Natural killer cell (primary cell): ENCODE measurements at regions of chr10 and their contacts with region 1.

Region 1: DNA sequence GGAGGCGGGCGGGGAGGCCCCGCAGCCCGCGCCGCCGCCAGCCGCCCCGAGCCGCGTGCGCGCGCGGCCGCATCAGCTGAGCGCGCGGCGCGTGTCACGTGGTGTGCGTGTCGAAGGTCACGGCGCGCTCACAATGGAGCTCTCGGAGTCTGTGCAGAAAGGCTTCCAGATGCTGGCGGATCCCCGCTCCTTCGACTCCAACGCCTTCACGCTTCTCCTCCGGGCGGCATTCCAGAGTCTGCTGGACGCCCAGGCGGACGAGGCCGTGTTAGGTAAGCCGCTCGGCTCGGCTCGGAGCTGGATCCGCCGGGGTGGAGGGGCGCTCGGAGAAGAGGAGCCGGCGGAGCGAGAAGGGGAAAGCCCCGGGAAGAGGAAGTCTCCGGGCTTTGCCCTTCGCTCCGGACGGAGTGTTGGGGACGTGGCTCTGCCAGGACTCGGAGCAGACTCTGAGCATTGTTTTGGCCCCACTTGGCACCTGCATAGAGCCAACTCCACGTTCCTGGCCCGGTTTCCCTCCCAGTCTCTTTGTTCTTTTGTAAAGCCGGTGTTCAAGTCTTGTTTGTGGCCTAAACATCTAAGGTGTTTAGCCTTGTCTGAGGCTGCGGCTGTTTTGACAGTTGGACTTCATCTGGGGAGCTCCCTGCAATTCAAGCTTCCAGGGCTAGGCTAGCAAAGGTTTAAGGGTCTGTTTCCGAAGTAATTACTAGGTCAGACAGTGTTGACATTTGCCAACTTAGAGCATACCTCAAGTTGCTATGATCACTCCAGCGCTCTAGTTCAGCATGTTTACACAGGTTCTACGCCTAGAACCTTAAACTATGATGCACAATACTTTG is at the start of gene COMMD3:
- DNase-seq: peak; percentile 83 to 94
- ATAC-seq: peak; percentile 65 to 92 (median 79)
- H3K4me3 ChIP-seq: peak within 1 kb of the TSS; percentile 96
- H3K4me3 Mint-ChIP-seq: peak within 1 kb of the TSS; percentile 100
- H3K27ac ChIP-seq: peak within 1 kb of the TSS; percentile 89
- H3K27ac Mint-ChIP-seq: peak within 1 kb of the TSS; percentile 92 to 93
- H3K4me1 ChIP-seq: peaks cover 11% of the 10 kb centered on the region
- H3K4me1 Mint-ChIP-seq: peaks cover 22 to 33% of the 10 kb centered on the region in 2 donors
- H3K27me3 ChIP-seq: peaks cover 2% of the 10 kb centered on the region
- H3K27me3 Mint-ChIP-seq: peaks cover 4 to 8% of the 10 kb centered on the region in 2 donors
- CTCF ChIP-seq: no peak
- total RNA-seq, gene COMMD3: 43.1 to 48.3 (median 44.2) TPM

Region 2: GRCh38 chr10:21533467-21534279 is 782.8 kb before region 1 on chr10 and contains the start of gene MLLT10:
- intact Hi-C with region 1: loop called (anchors 5 kb)
- DNase-seq: peak; percentile 87 to 97
- ATAC-seq: peak; percentile 82 to 94 (median 83)
- H3K4me3 ChIP-seq: peak within 1 kb of the TSS; percentile 73
- H3K4me3 Mint-ChIP-seq: peak within 1 kb of the TSS; percentile 91
- H3K27ac ChIP-seq: peak within 1 kb of the TSS; percentile 69
- H3K27ac Mint-ChIP-seq: peak within 1 kb of the TSS; percentile 76 to 90
- H3K4me1 ChIP-seq: peaks cover 11% of the 10 kb centered on the region
- H3K4me1 Mint-ChIP-seq: peaks cover 16% of the 10 kb centered on the region in 2 donors
- H3K27me3 ChIP-seq: peaks cover 6% of the 10 kb centered on the region
- H3K27me3 Mint-ChIP-seq: peaks cover 5 to 9% of the 10 kb centered on the region in 2 donors
- CTCF ChIP-seq: peak; percentile 27
- total RNA-seq, gene MLLT10: 40.4 to 65.2 (median 60.0) TPM

Region 3: GRCh38 chr10:22003079-22003913 is 313.2 kb before region 1 on chr10 and contains the start of gene DNAJC1:
- intact Hi-C with region 1: loop called (anchors 5 kb)
- DNase-seq: peak; percentile 96 to 98
- ATAC-seq: peak; percentile 84 to 96 (median 89)
- H3K4me3 ChIP-seq: peak within 1 kb of the TSS; percentile 96
- H3K4me3 Mint-ChIP-seq: peak within 1 kb of the TSS; percentile 91
- H3K27ac ChIP-seq: peak within 1 kb of the TSS; percentile 97
- H3K27ac Mint-ChIP-seq: peak within 1 kb of the TSS; percentile 85 to 88
- H3K4me1 ChIP-seq: peaks cover 4% of the 10 kb centered on the region
- H3K4me1 Mint-ChIP-seq: peaks cover 38 to 45% of the 10 kb centered on the region in 2 donors
- H3K27me3 ChIP-seq: no peaks in the 10 kb centered on the region
- H3K27me3 Mint-ChIP-seq: peaks cover 0 to 5% of the 10 kb centered on the region in 2 donors
- CTCF ChIP-seq: peak; percentile 9
- total RNA-seq, gene DNAJC1: 38.4 to 63.7 (median 50.6) TPM

Region 4: DNA sequence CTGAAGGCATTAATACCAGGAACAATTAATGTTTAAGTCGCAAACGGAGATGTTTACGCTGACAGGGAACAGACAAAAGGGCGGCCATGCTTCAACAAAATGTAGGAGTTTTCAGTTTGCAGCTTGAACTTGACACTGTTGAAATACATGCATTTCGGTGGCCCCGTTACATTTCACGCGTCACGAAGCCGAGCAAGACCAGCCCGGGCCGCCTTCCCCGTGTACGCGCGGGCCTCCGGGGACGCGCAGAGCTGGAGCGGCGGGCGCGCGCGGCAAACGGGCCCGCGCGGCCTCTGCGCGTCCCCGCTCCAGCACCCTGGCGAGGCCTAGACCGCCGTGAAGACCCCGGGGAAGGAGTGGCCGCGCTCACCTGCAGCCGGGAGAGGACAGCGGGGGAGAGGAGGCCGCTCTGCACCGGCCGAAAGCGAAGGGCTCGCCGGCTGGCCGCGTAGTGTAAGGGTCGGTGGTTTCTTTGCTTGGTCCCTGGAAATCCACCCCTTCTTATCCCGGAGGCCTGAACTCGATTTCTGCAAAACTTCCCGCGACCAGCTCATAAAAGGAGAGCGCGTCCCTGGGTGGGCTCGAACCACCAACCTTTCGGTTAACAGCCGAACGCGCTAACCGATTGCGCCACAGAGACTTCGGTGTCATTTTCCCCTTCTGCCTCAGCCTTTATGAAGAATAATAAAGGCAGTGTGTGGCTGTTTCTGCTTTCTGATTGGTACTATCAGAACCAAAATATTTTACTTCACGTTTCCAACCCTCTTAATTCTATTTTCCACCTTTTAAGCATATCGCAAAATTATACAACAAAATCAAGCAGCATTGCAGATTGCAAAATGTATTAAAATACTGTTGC is 87.3 kb before region 1 on chr10:
- intact Hi-C with region 1: loop called (anchors 1 kb)
- DNase-seq: peak; percentile 85 to 93
- ATAC-seq: peak; percentile 84 to 93 (median 85)
- H3K4me3 ChIP-seq: peak overlapping the region; percentile 69
- H3K4me3 Mint-ChIP-seq: peak overlapping the region; percentile 93
- H3K27ac ChIP-seq: peak overlapping the region; percentile 70
- H3K27ac Mint-ChIP-seq: peak overlapping the region; percentile 96 to 97
- H3K4me1 ChIP-seq: peaks cover 3% of the 10 kb centered on the region
- H3K4me1 Mint-ChIP-seq: peaks cover 15 to 21% of the 10 kb centered on the region in 2 donors
- H3K27me3 ChIP-seq: peaks cover 4% of the 10 kb centered on the region
- H3K27me3 Mint-ChIP-seq: peaks cover 14 to 16% of the 10 kb centered on the region in 2 donors
- CTCF ChIP-seq: no peak

Region 5: GRCh38 chr10:22251751-22252223 is 64.7 kb before region 1 on chr10:
- intact Hi-C with region 1: loop called (anchors 5 kb)
- DNase-seq: peak; percentile 34 to 81
- ATAC-seq: peak; percentile 61 to 68 (median 67)
- H3K4me3 ChIP-seq: peak overlapping the region; percentile 83
- H3K4me3 Mint-ChIP-seq: peak overlapping the region; percentile 98
- H3K27ac ChIP-seq: peak overlapping the region; percentile 96
- H3K27ac Mint-ChIP-seq: peak overlapping the region; percentile 74 to 85
- H3K4me1 ChIP-seq: peaks cover 19% of the 10 kb centered on the region
- H3K4me1 Mint-ChIP-seq: peaks cover 17 to 23% of the 10 kb centered on the region in 2 donors
- H3K27me3 ChIP-seq: peaks cover 19% of the 10 kb centered on the region
- H3K27me3 Mint-ChIP-seq: peaks cover 34 to 49% of the 10 kb centered on the region in 2 donors
- CTCF ChIP-seq: no peak

Region 6: DNA sequence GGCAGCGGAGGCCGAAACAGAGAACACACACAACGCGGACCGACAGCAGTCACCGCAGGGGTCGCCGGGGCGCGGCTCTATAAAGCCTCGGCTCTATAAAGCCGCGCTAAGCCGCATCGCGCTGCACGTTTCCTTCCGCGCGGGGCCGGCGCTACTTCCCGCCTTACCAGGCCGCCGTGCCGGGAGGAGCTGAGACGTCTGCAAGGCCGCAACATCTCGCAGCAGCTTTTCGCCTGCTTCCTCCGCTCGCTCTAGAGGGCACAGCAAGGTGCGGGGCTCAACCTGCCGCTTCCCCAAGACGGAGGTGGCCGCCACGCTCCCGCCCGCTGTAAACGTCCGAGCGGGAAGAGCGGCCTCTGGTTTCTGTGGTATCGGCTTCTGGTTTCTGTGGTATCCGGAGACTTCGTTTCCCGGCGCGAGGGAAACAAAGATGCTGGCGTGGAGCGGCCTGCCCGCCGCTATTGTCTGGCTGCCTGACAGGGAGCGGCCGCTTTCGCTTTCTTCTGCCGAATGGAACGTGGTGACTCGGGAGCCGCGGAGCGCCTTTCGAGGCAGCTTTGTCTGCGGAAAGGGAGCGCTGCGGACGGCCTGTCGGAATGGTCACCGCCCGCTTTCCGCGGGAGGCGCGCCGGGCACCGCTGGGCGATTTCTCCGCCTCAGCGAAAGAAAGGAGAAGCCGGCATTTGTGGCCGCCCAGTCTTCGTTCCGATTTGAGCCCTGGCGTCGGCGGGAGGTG is 120.5 kb after region 1 on chr10:
- intact Hi-C with region 1: loop called (anchors 5 kb)
- DNase-seq: peak; percentile 86 to 95
- ATAC-seq: peak; percentile 80 to 93 (median 85)
- H3K4me3 ChIP-seq: peak overlapping the region; percentile 73
- H3K4me3 Mint-ChIP-seq: peak overlapping the region; percentile 95
- H3K27ac ChIP-seq: peak overlapping the region; percentile 98
- H3K27ac Mint-ChIP-seq: peak overlapping the region; percentile 97
- H3K4me1 ChIP-seq: peaks cover 23% of the 10 kb centered on the region
- H3K4me1 Mint-ChIP-seq: peaks cover 37 to 43% of the 10 kb centered on the region in 2 donors
- H3K27me3 ChIP-seq: peaks cover 2% of the 10 kb centered on the region
- H3K27me3 Mint-ChIP-seq: no peaks in the 10 kb centered on the region
- CTCF ChIP-seq: no peak